ENCODE measurements at regions of chr19 and their contacts with region 1.

Region 1: DNA sequence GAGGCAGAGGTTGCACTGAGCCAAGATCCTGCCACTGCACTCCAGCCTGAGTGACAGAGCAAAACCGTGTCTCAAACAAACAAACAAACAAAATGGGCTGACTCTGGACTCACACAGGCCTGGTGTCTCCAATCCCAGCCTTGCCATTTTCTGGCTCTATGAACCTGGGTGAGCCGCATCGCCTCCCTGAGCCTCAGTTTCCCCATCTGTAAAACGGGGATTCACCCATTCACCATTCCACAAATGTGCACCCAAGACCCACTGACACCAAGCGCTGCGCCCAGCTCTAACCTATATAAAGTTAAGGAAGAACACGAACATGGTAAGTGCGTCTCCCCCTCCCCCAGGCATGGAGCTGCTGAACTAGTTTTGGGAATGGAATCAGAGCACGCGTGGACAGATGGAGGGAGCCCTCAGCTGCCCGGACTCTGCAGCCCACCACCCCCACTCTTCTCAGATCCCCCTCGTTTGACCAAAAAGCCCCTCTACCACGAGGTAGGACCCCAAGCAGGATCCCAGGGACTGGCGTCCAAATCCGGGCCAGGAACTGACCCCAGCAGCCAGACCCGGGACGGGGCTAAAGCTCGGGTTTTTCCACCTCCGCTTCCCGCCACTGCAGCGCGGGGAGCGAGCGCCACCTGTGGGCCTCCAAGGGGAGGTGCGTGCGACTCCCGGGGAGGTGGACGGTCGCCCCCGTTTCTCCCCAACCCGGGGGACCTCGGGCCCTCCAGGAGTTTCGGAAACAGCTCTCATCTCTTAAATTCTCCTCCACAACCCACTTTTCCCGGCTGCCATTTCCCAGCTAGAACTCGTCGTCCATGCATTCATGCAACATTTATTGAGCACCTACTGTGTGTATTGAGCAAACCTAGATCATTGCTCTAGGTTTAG is 33.0 kb upstream of the ADGRE5 start:
- DNase-seq: peak; percentile 84
- ATAC-seq: peak; percentile 63
- H3K4me3 Mint-ChIP-seq: peak overlapping the region; percentile 56
- H3K27ac Mint-ChIP-seq: peak overlapping the region; percentile 80
- H3K4me1 Mint-ChIP-seq: peaks cover 24% of the 10 kb centered on the region
- H3K27me3 Mint-ChIP-seq: no peaks in the 10 kb centered on the region

Region 2: DNA sequence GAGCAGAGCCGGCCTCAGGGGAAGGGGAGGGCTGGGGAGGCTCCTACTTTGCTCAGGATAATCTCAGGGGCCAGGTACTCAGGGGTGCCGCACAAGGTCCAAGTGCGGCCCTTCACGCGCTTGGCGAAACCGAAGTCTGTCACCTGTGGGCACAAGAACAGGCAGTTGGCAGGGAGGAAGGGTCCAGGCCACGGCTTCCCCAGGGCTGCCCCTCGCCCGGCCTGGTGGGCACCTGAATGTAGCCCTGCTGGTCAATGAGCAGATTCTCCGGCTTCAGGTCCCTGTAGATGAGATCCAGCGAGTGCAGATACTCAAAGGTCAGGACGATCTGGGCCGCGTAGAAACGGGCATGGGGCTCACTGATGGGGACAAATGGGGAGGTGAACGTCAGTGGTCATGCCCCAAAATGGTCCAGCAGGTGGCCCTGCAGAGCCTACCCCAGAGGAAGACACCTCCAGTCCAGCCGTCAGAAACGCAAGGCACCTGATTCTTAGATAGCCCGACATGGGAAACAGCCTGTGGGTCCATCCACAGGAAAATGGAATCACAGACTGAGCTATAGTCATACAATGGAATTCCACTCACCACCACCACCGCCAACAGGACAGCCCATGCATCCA is 250.6 kb before region 1 on chr19:
- CTCF ChIA-PET with region 1: no interaction called
- POLR2A ChIA-PET with region 1: no interaction called
- intact Hi-C with region 1: no loop called
- DNase-seq: no peak
- ATAC-seq: no peak
- H3K4me3 Mint-ChIP-seq: no peak overlapping the region
- H3K27ac Mint-ChIP-seq: no peak overlapping the region
- H3K4me1 Mint-ChIP-seq: peaks cover 3% of the 10 kb centered on the region
- H3K27me3 Mint-ChIP-seq: no peaks in the 10 kb centered on the region

Region 3: GRCh38 chr19:14198384-14199376 is 149.6 kb before region 1 on chr19:
- CTCF ChIA-PET with region 1: interaction called, 20 read pairs
- POLR2A ChIA-PET with region 1: no interaction called
- intact Hi-C with region 1: loop called (anchors 1 to 2 kb)
- DNase-seq: peak; percentile 21
- ATAC-seq: no peak
- H3K4me3 Mint-ChIP-seq: no peak overlapping the region
- H3K27ac Mint-ChIP-seq: no peak overlapping the region
- H3K4me1 Mint-ChIP-seq: peaks cover 21% of the 10 kb centered on the region
- H3K27me3 Mint-ChIP-seq: no peaks in the 10 kb centered on the region

Region 4: GRCh38 chr19:14300303-14300702 is 47.9 kb before region 1 on chr19:
- CTCF ChIA-PET with region 1: interaction called, 12 read pairs
- POLR2A ChIA-PET with region 1: no interaction called
- intact Hi-C with region 1: no loop called
- DNase-seq: no peak
- ATAC-seq: no peak
- H3K4me3 Mint-ChIP-seq: no peak overlapping the region
- H3K27ac Mint-ChIP-seq: no peak overlapping the region
- H3K4me1 Mint-ChIP-seq: no peaks in the 10 kb centered on the region
- H3K27me3 Mint-ChIP-seq: no peaks in the 10 kb centered on the region

Region 5: DNA sequence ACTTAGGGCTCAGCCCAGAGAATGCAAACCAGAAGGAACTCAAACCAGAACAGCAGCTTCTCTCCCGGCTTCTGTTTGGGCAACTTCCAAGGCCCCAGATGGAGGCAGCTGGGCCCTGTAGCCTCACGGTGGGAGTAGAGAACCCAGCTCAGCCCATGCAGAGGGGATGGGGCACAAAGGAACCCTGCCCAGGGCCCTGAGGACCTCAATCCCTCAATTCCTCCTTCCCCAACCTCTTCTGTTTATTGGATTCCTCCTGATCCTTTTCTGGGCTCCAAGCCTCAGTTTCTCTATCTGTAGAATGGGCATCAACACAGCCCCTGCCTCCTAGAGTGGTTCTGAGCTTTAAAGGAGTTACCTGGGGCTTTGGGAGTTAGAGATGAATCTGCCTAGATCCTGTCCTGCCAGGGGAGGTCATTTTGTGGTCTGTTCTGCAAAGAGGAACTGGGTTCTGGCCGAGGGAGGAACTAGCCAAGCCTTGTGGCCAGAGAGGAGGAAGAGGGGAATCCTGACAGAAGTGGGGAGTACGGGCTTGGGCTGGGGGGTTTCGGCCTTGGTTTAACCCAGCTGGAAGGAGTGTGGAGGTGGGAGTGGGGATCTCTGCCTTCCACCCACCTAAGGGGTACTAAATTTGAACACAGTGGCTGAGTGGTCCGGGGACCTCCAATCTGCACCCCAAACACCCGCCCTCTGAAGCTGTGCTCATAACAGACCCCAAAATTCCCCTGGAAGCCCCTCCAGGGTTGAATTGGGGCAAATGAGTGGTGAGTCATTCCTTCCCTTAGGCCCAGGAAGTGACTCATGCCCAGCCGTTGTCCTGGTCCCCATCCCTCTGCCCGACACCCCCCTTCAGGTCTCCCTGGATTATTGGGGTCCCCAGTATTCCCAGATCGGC is 35.7 kb after region 1 on chr19:
- CTCF ChIA-PET with region 1: interaction called, 18 read pairs
- POLR2A ChIA-PET with region 1: no interaction called
- intact Hi-C with region 1: no loop called
- DNase-seq: peak; percentile 72
- ATAC-seq: peak; percentile 10
- H3K4me3 Mint-ChIP-seq: peak overlapping the region; percentile 92
- H3K27ac Mint-ChIP-seq: peak overlapping the region; percentile 99
- H3K4me1 Mint-ChIP-seq: peaks cover 40% of the 10 kb centered on the region
- H3K27me3 Mint-ChIP-seq: no peaks in the 10 kb centered on the region

Region 6: DNA sequence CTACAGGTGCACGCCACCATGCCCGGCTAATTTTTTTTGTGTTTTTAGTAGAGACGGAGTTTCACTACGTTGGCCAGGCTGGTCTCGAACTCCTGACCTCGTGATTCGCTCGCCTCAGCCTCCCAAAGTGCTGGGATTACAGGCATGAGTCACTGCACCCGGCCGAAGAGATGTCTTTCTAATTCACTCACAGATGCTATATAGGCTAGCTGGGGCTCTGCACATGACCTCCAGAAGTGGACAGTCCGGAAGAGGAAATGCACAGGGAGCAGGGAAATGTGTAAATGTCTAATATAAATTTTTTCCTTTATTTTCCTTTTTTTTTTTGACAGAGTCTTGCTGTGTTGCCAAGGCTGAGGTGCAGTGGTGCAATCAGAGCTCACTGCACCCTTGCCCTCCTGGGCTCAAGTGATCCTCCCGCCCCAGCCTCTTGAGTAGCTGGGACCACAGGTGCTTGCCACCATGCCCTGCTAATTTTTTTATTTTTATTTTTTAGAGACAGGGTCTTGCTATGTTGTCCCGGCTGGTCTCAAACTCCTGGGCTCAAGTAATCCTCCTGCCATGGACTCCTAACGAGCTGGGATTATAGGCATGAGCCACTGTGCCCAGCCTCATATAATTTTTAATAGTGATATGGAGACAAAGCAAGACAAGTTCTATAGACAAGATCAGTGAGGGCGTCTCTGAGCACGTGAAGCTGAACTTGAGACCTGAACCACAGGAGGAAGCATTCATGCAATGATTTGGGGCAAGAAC is 139.3 kb after region 1 on chr19:
- CTCF ChIA-PET with region 1: interaction called, 4 read pairs
- POLR2A ChIA-PET with region 1: no interaction called
- intact Hi-C with region 1: loop called in 1 of 2 experiments (anchors 5 kb)
- DNase-seq: no peak
- ATAC-seq: no peak
- H3K4me3 Mint-ChIP-seq: no peak overlapping the region
- H3K27ac Mint-ChIP-seq: no peak overlapping the region
- H3K4me1 Mint-ChIP-seq: peaks cover 2% of the 10 kb centered on the region
- H3K27me3 Mint-ChIP-seq: no peaks in the 10 kb centered on the region